ENCODE measurements at regions of chr18 and their contacts with region 1.

Region 1: DNA sequence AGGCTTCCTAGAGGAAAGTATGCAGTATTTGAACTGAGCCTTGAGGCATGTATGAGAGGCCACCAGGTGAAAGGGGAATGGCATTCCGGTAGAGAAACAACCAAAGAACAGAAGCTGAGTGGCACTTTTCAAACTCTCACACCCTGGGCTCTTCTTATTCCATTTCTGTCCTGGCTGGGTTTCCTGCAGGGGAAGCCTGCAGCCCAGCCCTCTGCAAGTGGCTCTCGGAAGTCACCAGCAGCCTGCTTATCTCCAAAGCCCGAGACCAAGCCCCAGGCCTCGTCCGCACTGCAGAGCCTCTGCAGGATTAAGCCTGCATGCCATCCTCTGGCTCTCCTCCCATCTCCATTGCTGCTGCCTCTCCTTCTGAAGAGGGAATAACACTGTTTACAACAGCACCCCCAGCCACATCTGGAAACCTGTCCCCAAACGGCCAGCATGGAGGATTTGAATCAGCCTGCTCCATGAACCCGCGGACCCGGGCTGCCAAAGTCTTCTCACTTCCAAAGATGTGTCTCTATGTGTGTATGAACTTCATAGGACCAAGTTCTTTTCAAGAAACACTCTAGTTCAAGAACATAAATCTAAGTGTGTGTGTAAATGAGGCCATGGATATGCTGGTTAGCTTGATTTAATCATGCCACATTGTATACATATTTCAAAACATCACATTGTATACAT is 54.2 kb downstream of the DIPK1C start:
- DNase-seq: no peak
- H3K4me3 ChIP-seq: no peak overlapping the region
- H3K27ac ChIP-seq: no peak overlapping the region
- H3K4me1 ChIP-seq: peaks cover 0 to 4% of the 10 kb centered on the region in 2 donors
- H3K27me3 ChIP-seq: no peaks in the 10 kb centered on the region
- CTCF ChIP-seq: no peak

Region 2: GRCh38 chr18:74459889-74460288 is 57.0 kb after region 1 on chr18:
- intact Hi-C with region 1: loop called (anchors 5 kb)
- DNase-seq: peak in 1 of 2 donors; percentile 30
- H3K4me3 ChIP-seq: no peak overlapping the region
- H3K27ac ChIP-seq: no peak overlapping the region
- H3K4me1 ChIP-seq: peaks cover 0 to 7% of the 10 kb centered on the region in 2 donors
- H3K27me3 ChIP-seq: peaks cover 5% of the 10 kb centered on the region
- CTCF ChIP-seq: no peak